ENCODE measurements at regions of chr5 and their contacts with region 1.

Region 1: DNA sequence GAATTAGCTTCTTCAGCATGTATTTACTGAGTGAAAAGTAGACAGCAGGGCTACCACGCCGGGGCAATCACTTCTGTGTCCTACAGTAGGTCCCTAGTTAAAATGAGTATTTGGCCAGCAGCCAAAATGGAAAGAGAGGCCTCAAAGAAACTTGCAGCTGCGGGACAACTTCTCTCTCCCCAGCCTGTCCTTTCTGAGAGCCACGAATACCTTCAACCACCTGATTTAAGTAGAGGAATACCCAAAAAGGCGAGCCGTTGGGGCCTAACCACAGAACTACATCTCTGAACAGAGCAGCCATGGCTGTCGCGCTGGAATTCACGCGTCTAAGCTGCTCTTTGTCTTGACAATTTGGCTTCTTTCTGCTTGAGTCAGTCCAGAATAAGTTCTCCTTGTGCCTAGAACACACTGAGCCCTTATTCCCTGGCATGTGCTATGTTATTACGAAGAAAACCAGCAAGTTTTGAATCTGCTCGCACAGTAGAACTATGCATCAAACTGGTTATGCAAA is 43.8 kb upstream of the GOLPH3 start:
- DNase-seq: peak in 4 of 10 donors; percentile 21 to 54 (median 44)
- H3K4me3 ChIP-seq: peak overlapping the region in 35 of 59 donors; percentile 2 to 53 (median 22)
- H3K27ac ChIP-seq: peak overlapping the region in 56 of 59 donors; percentile 11 to 92 (median 76)
- H3K27me3 ChIP-seq: no peaks in the 10 kb centered on the region
- CTCF ChIP-seq: no peak

Region 2: GRCh38 chr5:31537856-31538255 is 680.1 kb before region 1 on chr5:
- intact Hi-C with region 1: no loop called
- DNase-seq: no peak
- H3K4me3 ChIP-seq: no peak overlapping the region
- H3K27ac ChIP-seq: no peak overlapping the region
- H3K27me3 ChIP-seq: no peaks in the 10 kb centered on the region
- CTCF ChIP-seq: no peak

Region 3: DNA sequence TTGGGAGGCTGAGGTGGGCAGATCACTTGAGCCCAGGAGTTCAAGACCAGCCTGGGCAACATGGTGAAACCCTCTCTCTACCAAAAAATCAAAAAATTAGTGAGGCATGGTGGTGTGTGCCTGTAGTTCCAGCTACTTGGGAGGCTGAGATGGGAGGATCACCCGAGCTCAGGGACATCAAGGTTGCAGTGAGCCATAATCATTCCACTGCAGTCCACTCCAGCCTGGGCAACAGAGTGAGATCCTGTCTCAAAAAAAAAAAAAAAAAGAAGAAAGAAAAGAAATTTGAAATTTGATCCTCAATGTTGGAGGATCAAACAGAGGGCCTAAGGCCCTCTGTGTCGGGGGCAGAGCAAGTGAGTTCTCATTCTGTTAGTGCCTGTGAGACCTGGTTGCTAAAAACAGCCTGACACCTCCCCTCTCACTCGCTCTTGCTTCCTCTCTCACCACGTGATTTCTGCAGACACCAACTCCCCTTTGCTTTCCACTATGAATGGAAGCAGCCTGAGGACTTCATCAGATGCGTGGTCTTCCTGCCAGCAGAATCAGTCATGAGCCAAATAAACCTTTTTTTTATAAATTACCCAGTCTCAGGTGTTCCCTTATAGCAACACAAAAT is 35.4 kb before region 1 on chr5:
- intact Hi-C with region 1: loop called in 1 of 2 experiments (anchors 5 kb)
- DNase-seq: no peak
- H3K4me3 ChIP-seq: no peak overlapping the region
- H3K27ac ChIP-seq: no peak overlapping the region
- H3K27me3 ChIP-seq: no peaks in the 10 kb centered on the region
- CTCF ChIP-seq: no peak